Natural killer cell (primary cell): ENCODE measurements at regions of chr11 and their contacts with region 1.

Region 1: DNA sequence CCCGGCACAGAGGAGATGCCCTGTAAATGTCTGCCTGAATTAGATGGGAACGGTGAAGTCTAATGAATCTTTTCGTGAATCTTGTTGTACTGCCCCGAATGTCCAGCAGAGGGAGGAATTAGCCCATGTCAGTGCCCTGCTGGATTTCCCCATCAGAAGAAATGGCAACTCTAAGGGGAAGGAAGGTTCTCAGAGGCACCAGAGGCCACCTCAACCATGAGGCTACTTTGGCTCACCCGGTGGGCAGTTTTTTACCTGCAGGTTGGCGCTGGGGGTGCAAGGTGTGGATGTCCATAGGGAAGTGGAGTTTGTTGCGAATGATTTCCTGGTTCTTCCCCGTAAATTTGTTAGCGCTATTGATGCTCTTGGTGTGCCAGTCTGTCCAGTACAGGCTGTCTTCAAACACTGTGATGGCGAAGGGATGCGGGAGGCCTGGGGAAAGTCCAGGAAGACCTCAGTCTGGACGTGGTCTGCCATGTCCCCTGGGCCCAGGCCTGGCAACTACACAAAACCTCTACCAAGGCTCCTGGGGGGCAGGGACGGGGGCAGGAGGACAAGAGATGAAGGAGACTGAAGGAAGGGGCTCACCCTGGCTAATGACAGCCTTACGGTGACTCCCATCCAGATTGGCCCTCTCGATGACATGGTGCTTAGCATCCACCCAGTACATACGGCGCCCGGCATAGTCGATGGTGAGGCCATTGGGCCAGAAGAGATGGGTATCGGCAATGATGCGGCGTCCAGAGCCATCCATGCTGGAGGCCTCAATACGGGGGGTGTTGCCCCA is 28.5 kb downstream of the LRP4 start:
- DNase-seq: peak; percentile 56 to 88
- ATAC-seq: peak; percentile 86 to 99 (median 98)
- H3K4me3 ChIP-seq: no peak overlapping the region
- H3K4me3 Mint-ChIP-seq: no peak overlapping the region
- H3K27ac ChIP-seq: no peak overlapping the region
- H3K27ac Mint-ChIP-seq: no peak overlapping the region
- H3K4me1 ChIP-seq: no peaks in the 10 kb centered on the region
- H3K4me1 Mint-ChIP-seq: no peaks in the 10 kb centered on the region
- H3K27me3 ChIP-seq: no peaks in the 10 kb centered on the region
- H3K27me3 Mint-ChIP-seq: peaks cover 7 to 19% of the 10 kb centered on the region in 2 donors
- CTCF ChIP-seq: peak; percentile 79

Region 2: DNA sequence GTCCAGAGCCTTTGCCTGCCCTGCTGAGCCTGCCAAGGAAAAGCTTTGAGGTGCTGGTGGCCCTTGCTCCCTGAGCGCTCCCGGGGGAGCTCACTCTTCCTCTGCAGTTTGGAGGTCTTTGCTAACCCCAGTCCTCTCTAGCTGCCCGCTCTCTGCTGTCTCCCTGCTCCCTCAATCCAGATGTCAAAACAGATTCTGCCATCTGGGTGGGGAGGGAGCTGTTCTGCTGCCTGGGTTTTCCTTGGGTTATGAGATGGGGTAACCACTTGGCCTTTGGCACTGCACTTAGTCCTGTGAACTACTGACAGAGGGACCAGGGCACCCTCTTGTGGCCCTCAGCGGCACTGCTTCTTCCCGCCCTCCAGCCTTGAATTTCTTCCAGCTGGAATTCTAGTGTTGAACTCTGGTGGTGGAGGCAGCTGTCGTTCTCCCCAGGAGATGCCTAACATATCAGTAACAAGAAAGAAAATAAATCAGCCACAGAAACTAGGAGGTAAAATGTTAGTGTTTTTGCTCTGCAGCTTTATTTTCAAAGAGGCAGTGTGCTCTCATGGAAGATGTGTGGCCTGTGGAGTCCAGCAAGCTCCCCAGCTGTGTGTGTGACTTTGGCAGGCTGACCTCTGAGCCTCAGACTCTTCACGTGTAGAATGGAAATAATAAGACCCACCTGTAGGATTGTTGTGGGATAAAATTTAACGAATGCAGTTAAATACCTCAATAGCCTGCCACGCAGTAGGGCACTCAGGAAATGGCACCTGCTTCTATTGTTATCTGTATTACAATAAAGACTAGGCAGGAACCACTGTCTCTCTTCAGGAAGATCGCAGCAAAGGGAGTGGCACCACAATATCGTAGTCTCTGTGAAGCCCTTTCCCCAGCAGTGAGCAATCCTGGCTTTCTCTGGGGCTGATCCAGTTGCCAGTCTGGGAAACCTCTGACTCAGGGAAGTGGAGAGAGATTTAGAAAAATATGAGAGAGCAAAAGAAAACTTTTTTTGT is 263.4 kb after region 1 on chr11:
- intact Hi-C with region 1: loop called (anchors 1 kb)
- DNase-seq: peak; percentile 31 to 77
- ATAC-seq: peak; percentile 54 to 70 (median 64)
- H3K4me3 ChIP-seq: no peak overlapping the region
- H3K4me3 Mint-ChIP-seq: peak overlapping the region; percentile 9
- H3K27ac ChIP-seq: no peak overlapping the region
- H3K27ac Mint-ChIP-seq: peak overlapping the region; percentile 12 to 24
- H3K4me1 ChIP-seq: peaks cover 31% of the 10 kb centered on the region
- H3K4me1 Mint-ChIP-seq: peaks cover 26 to 30% of the 10 kb centered on the region in 2 donors
- H3K27me3 ChIP-seq: no peaks in the 10 kb centered on the region
- H3K27me3 Mint-ChIP-seq: no peaks in the 10 kb centered on the region
- CTCF ChIP-seq: peak; percentile 75

Region 3: GRCh38 chr11:47161134-47161854 is 271.4 kb after region 1 on chr11:
- intact Hi-C with region 1: loop called (anchors 1 kb)
- DNase-seq: peak; percentile 55 to 82
- ATAC-seq: peak; percentile 77 to 83 (median 81)
- H3K4me3 ChIP-seq: no peak overlapping the region
- H3K4me3 Mint-ChIP-seq: no peak overlapping the region
- H3K27ac ChIP-seq: no peak overlapping the region
- H3K27ac Mint-ChIP-seq: peak overlapping the region in 1 of 2 donors; percentile 20
- H3K4me1 ChIP-seq: no peaks in the 10 kb centered on the region
- H3K4me1 Mint-ChIP-seq: no peaks in the 10 kb centered on the region
- H3K27me3 ChIP-seq: no peaks in the 10 kb centered on the region
- H3K27me3 Mint-ChIP-seq: no peaks in the 10 kb centered on the region
- CTCF ChIP-seq: peak; percentile 83

Region 4: GRCh38 chr11:47454180-47454644 is 564.3 kb after region 1 on chr11:
- intact Hi-C with region 1: loop called (anchors 1 kb)
- DNase-seq: peak; percentile 33 to 86
- ATAC-seq: peak; percentile 92 to 99 (median 98)
- H3K4me3 ChIP-seq: no peak overlapping the region
- H3K4me3 Mint-ChIP-seq: no peak overlapping the region
- H3K27ac ChIP-seq: no peak overlapping the region
- H3K27ac Mint-ChIP-seq: no peak overlapping the region
- H3K4me1 ChIP-seq: peaks cover 4% of the 10 kb centered on the region
- H3K4me1 Mint-ChIP-seq: peaks cover 5% of the 10 kb centered on the region in 2 donors
- H3K27me3 ChIP-seq: no peaks in the 10 kb centered on the region
- H3K27me3 Mint-ChIP-seq: no peaks in the 10 kb centered on the region
- CTCF ChIP-seq: peak; percentile 69

Region 5: DNA sequence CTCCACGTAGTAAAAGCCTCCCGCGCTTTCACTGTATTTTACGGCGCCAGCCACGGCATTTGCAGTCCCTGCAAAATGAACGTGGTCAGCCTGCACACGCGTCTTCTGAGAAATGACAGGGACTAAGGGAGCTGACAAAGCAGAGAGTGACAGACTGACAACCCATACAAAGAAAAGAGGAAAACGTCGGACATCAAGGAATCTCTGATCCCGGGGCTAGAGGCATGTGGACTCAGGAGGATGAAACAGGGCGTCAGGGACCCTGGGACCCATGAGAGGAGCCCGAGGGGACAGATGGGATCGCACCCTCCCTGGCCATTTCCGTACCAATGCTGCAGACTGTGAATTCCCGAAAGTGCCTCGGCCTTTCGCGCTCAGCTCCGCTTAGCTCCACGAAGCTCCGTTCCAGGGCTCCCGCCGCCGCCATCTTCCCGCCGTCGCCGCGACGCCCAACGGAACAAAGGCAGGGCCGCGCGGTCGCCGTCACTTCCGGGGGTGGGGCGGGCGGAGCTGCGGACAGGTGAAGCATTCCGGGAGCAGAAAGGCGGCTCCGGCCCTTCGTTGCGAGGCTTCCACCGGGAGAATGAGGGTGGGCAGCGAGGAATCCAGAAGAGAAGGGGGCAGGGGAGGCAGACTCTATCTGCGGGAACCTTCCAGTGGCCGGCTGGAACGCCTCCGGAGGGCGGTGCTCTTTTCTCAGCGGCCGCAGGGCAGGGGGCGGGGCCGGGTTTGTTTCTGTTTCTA is 958.2 kb after region 1 on chr11 and contains the start of gene NUP160:
- intact Hi-C with region 1: loop called (anchors 5 kb)
- DNase-seq: peak; percentile 89 to 90
- ATAC-seq: peak; percentile 89 to 92 (median 90)
- H3K4me3 ChIP-seq: peak within 1 kb of the TSS; percentile 82
- H3K4me3 Mint-ChIP-seq: peak within 1 kb of the TSS; percentile 98
- H3K27ac ChIP-seq: peak within 1 kb of the TSS; percentile 87
- H3K27ac Mint-ChIP-seq: peak within 1 kb of the TSS; percentile 95
- H3K4me1 ChIP-seq: peaks cover 20% of the 10 kb centered on the region
- H3K4me1 Mint-ChIP-seq: peaks cover 23 to 25% of the 10 kb centered on the region in 2 donors
- H3K27me3 ChIP-seq: no peaks in the 10 kb centered on the region
- H3K27me3 Mint-ChIP-seq: no peaks in the 10 kb centered on the region
- CTCF ChIP-seq: no peak
- total RNA-seq, gene NUP160: 36.6 to 53.3 (median 43.5) TPM